ENCODE measurements at regions of chr16 and their contacts with region 1.

Region 1: DNA sequence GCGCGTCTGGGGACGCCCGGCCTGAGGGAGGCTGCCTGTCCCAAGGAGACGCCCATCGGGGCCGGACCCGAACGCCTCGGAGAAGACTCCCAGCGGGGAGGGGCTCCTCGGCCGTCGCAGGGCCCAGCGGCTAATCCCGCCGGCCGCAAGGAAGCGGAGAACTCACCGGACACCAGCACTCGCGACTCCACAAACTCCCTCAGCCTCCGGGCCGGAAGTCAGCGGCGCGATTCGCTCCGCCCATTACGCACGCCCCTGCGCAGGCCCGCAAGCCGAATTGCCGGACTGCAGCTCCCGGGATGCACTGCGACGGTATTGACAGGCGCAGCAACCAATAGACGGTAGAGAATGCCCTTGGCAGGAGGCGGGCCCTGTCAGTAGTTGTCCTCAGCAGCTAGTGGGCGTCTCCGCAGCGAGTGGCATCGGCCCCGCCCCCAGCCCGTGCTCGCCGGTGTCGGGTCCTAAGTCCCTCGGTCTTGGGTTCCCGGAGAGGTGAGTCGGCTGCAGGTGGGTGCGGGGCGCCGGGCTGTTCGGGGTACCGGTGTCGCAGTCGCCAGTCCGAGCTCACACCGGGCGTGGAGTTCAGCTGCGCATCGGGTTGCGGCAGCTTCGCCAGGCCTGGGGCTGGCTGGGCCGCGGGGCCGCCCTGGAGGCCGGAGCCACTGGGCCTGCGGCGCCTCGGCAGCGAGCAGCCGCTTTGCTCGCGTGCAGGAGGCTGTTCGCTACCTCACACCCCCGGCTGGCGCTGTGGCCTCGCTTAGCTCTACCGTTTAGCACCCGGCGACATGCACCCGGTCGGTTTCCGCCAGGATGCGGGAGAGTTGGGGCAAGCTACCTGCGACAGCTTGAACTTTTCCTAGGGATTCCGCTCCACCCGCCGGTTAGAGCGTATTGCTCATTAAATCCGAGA is at the starts of genes ZNF174 and ZSCAN32:
- DNase-seq: peak; percentile 96 to 99
- H3K4me3 ChIP-seq: peak within 1 kb of the TSS; percentile 74 to 95
- H3K27ac ChIP-seq: peak within 1 kb of the TSS; percentile 79 to 91
- H3K4me1 ChIP-seq: peaks cover 3 to 18% of the 10 kb centered on the region in 2 donors
- H3K27me3 ChIP-seq: no peaks in the 10 kb centered on the region
- CTCF ChIP-seq: no peak
- total RNA-seq, gene ZNF174: 16.0 TPM
- total RNA-seq, gene ZSCAN32: 4.2 TPM

Region 2: GRCh38 chr16:3264137-3265036 is 136.6 kb before region 1 on chr16:
- intact Hi-C with region 1: loop called (anchors 1 kb)
- DNase-seq: peak; percentile 90 to 98
- H3K4me3 ChIP-seq: peak overlapping the region; percentile 56 to 66
- H3K27ac ChIP-seq: peak overlapping the region; percentile 89 to 94
- H3K4me1 ChIP-seq: peaks cover 0 to 10% of the 10 kb centered on the region in 2 donors
- H3K27me3 ChIP-seq: no peaks in the 10 kb centered on the region
- CTCF ChIP-seq: peak in 1 of 3 experiments; percentile 33

Region 3: DNA sequence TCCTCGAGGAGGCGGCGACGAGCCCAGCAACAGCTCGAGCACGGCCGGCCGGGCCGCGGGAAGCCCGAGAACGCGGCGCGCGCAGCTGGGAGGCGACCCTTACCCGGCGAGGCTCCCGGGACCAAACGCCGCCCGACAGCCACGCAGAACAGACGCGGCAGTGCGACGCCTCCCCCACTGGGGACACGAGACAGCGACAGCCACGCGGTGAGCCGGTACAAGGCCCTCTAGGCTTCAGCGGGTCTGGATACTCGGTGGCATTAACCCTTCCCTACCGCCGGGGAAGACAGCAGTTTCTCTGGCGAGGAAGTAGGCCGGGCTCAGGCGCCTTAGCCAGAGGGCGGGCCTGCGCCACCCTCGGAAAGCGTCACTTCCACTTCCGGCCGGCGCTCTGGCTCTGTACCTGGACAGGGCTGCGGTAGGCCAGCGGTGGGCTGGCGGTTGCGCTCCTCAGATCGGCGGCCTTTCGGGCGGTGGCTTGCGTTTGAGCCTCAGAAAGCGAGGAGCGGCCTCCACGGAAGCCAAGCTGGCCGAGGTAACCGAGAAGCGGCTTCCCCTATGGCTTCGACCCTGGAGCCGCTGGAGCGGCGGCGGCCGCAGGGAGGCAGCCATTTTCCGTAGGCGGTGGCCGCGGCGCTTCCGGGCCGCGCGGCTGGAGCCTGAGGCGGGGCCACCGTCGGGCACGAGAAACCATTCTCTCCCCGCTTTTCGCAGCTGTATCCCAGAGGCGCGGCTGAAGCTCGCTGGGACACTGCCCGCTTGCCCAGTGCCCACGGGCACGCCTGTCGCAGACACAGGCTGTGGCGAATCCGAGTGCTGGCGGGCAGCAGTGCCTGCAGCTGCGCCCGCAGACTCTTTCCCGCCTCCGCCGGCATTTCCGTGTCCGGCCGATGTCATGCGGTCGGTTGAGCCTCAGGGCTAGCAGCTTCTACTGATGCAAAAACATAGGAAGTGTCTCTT is 95.6 kb before region 1 on chr16 and contains the starts of genes TIGD7 and ZNF75A:
- intact Hi-C with region 1: loop called (anchors 2 kb)
- DNase-seq: peak in 1 of 2 donors; percentile 92
- H3K4me3 ChIP-seq: peak within 1 kb of the TSS; percentile 67 to 88
- H3K27ac ChIP-seq: peak within 1 kb of the TSS; percentile 93
- H3K4me1 ChIP-seq: peaks cover 0 to 7% of the 10 kb centered on the region in 2 donors
- H3K27me3 ChIP-seq: no peaks in the 10 kb centered on the region
- CTCF ChIP-seq: peak in 2 of 3 experiments; percentile 22 to 39
- total RNA-seq, gene TIGD7: 1.6 TPM
- total RNA-seq, gene ZNF75A: 8.3 TPM

Region 4: DNA sequence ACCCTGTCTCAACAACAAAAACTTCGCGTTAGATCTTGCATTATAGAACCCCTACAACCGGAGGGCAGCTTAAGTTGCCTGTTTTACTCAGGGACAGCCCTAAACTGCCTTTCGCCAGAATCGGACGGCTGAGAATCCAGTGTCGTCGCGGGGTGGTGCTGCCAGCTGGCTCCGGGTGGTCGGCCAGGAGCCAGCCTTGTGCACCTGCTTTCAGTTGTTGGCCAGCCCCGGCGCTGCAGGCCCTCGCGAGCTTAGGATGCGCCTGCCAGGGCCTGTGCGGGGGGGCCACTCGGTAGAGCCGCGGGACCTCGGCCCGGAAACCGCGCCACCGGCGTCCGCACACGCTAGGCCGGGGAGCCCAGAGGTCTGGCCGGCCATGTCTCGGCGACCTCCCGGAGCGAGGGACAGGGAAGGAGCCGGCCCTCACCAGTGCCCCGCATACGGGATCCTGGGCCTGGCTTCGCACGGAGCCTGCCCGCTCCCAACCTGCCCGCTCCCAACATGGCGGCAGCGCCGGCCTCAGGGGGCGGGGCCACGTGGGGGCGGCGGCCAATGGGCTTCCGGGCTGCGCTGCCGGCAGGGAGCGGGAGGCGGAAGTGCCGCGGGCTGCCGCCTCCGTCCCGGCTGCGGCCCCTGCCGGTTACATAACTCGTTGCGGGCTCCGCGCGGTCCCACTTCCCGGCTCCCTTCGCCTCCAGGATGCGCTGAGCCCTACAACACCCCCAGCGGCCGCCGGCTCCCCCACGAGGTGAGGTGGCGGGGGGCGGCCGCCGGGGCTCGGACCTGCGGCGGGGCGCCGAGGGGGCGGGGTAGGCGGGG is 56.6 kb after region 1 on chr16:
- intact Hi-C with region 1: loop called (anchors 2 kb)
- DNase-seq: peak; percentile 33 to 90
- H3K4me3 ChIP-seq: peak overlapping the region; percentile 72 to 73
- H3K27ac ChIP-seq: peak overlapping the region; percentile 92
- H3K4me1 ChIP-seq: peaks cover 8 to 17% of the 10 kb centered on the region in 2 donors
- H3K27me3 ChIP-seq: no peaks in the 10 kb centered on the region
- CTCF ChIP-seq: peak; percentile 38 to 48 (median 44)

Region 5: GRCh38 chr16:3467921-3468320 is 66.9 kb after region 1 on chr16:
- intact Hi-C with region 1: no loop called
- DNase-seq: no peak
- H3K4me3 ChIP-seq: no peak overlapping the region
- H3K27ac ChIP-seq: no peak overlapping the region
- H3K4me1 ChIP-seq: no peaks in the 10 kb centered on the region
- H3K27me3 ChIP-seq: no peaks in the 10 kb centered on the region
- CTCF ChIP-seq: no peak

Measured in ascending aorta (tissue), 2 donors.